Calu3 (cell line): ENCODE measurements at regions of chr6 and their contacts with region 1.

Region 1: GRCh38 chr6:165662749-165663282 is at the start of gene PDE10A:
- DNase-seq: peak; percentile 79
- H3K4me3 Mint-ChIP-seq: peak within 1 kb of the TSS; percentile 100
- H3K27ac Mint-ChIP-seq: peak within 1 kb of the TSS; percentile 85
- H3K4me1 Mint-ChIP-seq: peaks cover 30% of the 10 kb centered on the region
- H3K27me3 Mint-ChIP-seq: no peaks in the 10 kb centered on the region
- CTCF ChIP-seq: no peak
- total RNA-seq, gene PDE10A: 22.5 and 23.7 TPM in 2 replicates

Region 2: DNA sequence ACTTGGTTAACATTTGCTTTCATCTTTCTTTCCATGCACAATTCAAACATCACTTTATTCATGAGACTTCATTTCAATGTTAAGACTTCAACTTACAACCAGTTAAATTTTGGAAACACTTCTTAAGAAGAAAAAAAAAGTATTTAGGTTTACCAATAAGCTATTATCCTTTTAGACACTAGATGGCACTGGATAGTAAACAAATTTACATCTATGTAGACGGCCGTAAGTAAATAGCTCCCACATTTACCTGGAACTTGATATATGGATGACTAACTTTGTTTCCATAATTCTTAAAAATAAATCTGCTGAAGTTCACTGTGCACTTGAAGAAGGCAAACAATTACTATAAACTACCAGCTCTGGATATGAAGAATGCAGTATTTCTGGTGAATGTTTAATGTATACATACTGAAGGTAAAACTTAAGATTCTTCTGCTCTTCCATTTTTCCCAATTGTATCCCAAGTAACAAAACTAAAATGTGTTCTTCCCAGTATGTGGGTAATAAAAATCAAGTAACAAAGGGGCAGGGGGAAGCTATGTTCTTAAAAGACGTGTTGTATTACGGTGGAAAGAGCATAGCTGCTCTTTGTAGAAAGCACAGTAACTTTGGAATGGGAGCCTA is 222.8 kb before region 1 on chr6:
- CTCF ChIA-PET with region 1: interaction called, 3 read pairs
- intact Hi-C with region 1: loop called (anchors 5 kb)
- DNase-seq: no peak
- H3K4me3 Mint-ChIP-seq: no peak overlapping the region
- H3K27ac Mint-ChIP-seq: no peak overlapping the region
- H3K4me1 Mint-ChIP-seq: peaks cover 10% of the 10 kb centered on the region
- H3K27me3 Mint-ChIP-seq: no peaks in the 10 kb centered on the region
- CTCF ChIP-seq: no peak

Region 3: GRCh38 chr6:165573671-165574070 is 89.1 kb before region 1 on chr6:
- CTCF ChIA-PET with region 1: no interaction called
- intact Hi-C with region 1: loop called (anchors 5 kb)
- DNase-seq: peak; percentile 71
- H3K4me3 Mint-ChIP-seq: no peak overlapping the region
- H3K27ac Mint-ChIP-seq: no peak overlapping the region
- H3K4me1 Mint-ChIP-seq: peaks cover 41% of the 10 kb centered on the region
- H3K27me3 Mint-ChIP-seq: no peaks in the 10 kb centered on the region
- CTCF ChIP-seq: no peak

Region 4: GRCh38 chr6:165717732-165718465 is 55.1 kb after region 1 on chr6:
- CTCF ChIA-PET with region 1: no interaction called
- intact Hi-C with region 1: loop called (anchors 1 kb)
- DNase-seq: peak; percentile 35
- H3K4me3 Mint-ChIP-seq: peak overlapping the region; percentile 20
- H3K27ac Mint-ChIP-seq: peak overlapping the region; percentile 62
- H3K4me1 Mint-ChIP-seq: peaks cover 36% of the 10 kb centered on the region
- H3K27me3 Mint-ChIP-seq: no peaks in the 10 kb centered on the region
- CTCF ChIP-seq: no peak